OCI-LY7 (cell line): ENCODE measurements at regions of chr13 and their contacts with region 1.

Region 1: GRCh38 chr13:43016226-43016625 is 7.2 kb upstream of the DNAJC15 start:
- DNase-seq: no peak
- H3K4me3 ChIP-seq: no peak overlapping the region
- H3K27ac ChIP-seq: no peak overlapping the region
- H3K4me1 ChIP-seq: no peaks in the 10 kb centered on the region
- CTCF ChIP-seq: no peak

Region 2: GRCh38 chr13:42926555-42926954 is 89.7 kb before region 1 on chr13:
- CTCF ChIA-PET with region 1: no interaction called
- POLR2A ChIA-PET with region 1: no interaction called
- intact Hi-C with region 1: no loop called
- DNase-seq: no peak
- H3K4me3 ChIP-seq: no peak overlapping the region
- H3K27ac ChIP-seq: no peak overlapping the region
- H3K4me1 ChIP-seq: no peaks in the 10 kb centered on the region
- CTCF ChIP-seq: no peak

Region 3: GRCh38 chr13:43058831-43059230 is 42.6 kb after region 1 on chr13:
- CTCF ChIA-PET with region 1: no interaction called
- POLR2A ChIA-PET with region 1: no interaction called
- intact Hi-C with region 1: loop called (anchors 2 kb)
- DNase-seq: no peak
- H3K4me3 ChIP-seq: no peak overlapping the region
- H3K27ac ChIP-seq: no peak overlapping the region
- H3K4me1 ChIP-seq: peaks cover 28% of the 10 kb centered on the region
- CTCF ChIP-seq: no peak